Right cardiac atrium (tissue), 5 donors: ENCODE measurements at regions of chr10 and their contacts with region 1.

Region 1: DNA sequence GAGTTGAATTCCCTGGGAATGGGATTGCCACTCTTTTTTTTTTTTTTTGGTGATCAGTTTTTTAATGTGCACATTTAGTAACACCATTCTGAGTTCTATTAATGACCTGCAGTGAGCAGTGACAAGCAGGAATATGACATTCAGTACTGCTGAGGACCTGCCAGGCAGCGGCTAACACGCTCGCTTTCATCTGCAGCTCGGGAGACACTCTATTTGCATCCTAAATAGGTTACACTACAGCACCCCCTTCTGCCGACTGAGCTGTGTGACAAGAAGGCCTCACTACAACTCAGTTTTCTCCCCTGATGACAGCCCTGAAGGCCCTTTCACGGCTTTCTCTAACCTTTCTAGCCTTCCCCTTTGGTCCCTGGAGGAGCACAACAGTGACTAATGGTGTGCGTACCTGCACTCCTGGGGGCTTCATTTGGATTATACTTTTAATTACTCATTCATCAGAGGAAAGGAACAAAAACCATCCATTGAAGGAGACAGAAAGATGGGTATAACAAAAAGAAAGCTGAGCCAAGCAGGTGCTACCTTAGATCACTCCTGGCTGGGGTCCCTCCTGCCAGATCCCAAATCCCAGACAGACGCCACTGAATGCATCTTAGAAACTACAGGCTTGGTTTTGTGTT is 872.4 kb downstream of the LRMDA start:
- DNase-seq: peak; percentile 77 to 89 (median 84)
- ATAC-seq: peak; percentile 95 to 97
- H3K4me3 ChIP-seq: no peak overlapping the region
- H3K27ac ChIP-seq: peak overlapping the region; percentile 66
- H3K4me1 ChIP-seq: peaks cover 2% of the 10 kb centered on the region
- H3K27me3 ChIP-seq: no peaks in the 10 kb centered on the region

Region 2: GRCh38 chr10:75410132-75411005 is 893.4 kb before region 1 on chr10:
- intact Hi-C with region 1: loop called in 1 of 4 experiments (anchors 5 kb)
- DNase-seq: no peak
- ATAC-seq: no peak
- H3K4me3 ChIP-seq: peak overlapping the region; percentile 84
- H3K27ac ChIP-seq: no peak overlapping the region
- H3K4me1 ChIP-seq: no peaks in the 10 kb centered on the region
- H3K27me3 ChIP-seq: no peaks in the 10 kb centered on the region

Region 3: GRCh38 chr10:75827587-75828021 is 476.2 kb before region 1 on chr10:
- intact Hi-C with region 1: no loop called
- DNase-seq: no peak
- ATAC-seq: no peak
- H3K4me3 ChIP-seq: no peak overlapping the region
- H3K27ac ChIP-seq: no peak overlapping the region
- H3K4me1 ChIP-seq: peaks cover 2% of the 10 kb centered on the region
- H3K27me3 ChIP-seq: no peaks in the 10 kb centered on the region

Region 4: DNA sequence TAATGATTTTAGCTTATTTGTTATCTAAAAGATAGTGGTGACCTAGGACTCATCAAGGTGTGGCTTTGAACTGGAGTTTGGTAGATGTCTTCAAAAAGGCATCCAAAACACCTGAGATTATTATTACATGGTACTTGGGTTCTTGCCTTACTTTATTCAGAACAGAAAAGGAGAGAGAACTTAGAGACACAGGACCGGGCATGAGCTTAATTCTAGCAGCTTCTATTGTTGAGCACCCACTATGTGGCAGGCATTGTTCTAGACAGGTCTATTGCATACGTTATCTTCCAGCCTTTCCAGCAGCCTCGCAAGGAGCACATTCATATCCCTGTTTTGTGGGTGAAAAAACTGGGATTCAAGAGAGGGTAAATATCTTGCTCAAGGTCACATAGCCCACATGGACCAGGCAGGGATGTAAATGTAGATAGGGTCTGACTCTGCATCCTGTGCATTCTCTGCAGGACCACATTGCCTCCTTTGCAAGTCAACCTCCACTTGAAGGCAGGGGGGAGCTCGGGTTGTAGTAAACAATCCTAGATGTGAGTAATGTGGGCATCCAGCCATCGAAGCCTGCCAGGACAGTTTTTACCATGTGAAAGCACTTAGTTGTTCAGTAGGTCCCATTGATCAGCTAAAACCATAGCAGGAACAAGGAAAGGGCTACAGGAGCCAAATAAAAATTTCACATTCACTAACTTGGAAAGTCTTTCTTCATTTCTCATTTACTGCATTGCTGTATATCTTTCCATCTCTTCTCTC is 321.0 kb before region 1 on chr10:
- intact Hi-C with region 1: no loop called
- DNase-seq: peak in 2 of 3 donors; percentile 19 to 62
- ATAC-seq: no peak
- H3K4me3 ChIP-seq: no peak overlapping the region
- H3K27ac ChIP-seq: no peak overlapping the region
- H3K4me1 ChIP-seq: no peaks in the 10 kb centered on the region
- H3K27me3 ChIP-seq: no peaks in the 10 kb centered on the region

Region 5: DNA sequence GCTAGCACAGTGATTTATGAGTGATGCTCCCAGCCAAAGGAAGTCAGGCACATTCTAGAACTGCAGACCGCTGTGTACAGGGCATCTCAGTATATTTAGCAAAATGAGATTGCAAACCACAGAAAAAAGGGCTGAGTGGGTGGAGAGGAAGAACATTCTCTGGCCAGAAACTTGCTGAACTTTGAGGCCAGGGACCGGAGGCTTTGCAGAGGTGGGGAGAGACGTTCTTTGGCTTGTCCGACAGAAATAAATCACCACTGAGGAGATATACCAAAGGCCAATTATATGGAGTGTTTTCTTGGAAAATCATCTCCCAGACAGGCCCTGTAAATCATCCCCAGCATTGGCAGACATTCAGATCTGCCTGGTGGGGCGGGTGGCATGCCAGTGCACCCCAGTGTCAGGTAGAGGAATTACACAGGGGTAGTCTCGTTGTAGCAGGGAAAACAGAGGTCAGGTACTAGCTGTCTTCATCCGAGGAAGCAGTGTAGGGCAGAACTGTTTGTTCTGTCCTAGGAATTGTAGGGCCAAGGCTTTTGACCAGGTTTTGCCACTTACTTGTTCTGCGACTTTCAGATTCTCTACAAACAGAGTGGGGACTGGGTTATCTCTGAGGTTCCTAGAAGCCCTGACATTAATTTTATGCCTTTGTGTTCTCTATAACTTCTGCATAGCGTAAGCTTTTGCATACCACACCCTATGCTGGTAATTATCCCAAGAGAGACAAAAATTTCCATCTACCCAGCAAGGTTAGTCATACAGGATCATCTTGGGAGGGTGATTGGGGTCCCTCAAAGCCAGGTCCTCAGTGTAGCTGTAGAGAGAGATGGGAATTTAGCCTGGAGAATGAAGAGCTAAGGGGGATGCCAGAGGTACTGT is 216.8 kb before region 1 on chr10:
- intact Hi-C with region 1: no loop called
- DNase-seq: no peak
- ATAC-seq: peak; percentile 46 to 57
- H3K4me3 ChIP-seq: no peak overlapping the region
- H3K27ac ChIP-seq: no peak overlapping the region
- H3K4me1 ChIP-seq: no peaks in the 10 kb centered on the region
- H3K27me3 ChIP-seq: no peaks in the 10 kb centered on the region

Region 6: DNA sequence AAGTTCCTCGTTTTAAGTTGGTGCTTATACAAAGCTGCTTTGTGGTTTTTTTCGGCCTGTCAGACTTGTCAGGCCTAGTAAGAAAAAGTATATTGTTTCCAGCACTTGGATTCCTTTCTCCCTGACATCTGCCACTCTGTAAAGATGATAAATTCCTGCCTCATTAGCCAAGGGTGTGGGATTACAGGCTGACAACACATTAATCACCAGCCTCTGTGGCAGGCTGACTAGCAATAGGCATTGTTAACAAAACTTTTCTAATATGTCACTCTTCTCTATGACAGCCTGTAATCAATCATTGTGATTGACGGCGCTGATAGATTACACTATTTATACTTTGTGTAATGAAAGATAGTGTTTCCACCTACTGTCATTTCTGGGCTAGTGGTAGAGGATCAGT is 189.8 kb before region 1 on chr10:
- intact Hi-C with region 1: loop called in 1 of 4 experiments (anchors 10 kb)
- DNase-seq: no peak
- ATAC-seq: no peak
- H3K4me3 ChIP-seq: no peak overlapping the region
- H3K27ac ChIP-seq: no peak overlapping the region
- H3K4me1 ChIP-seq: peaks cover 2% of the 10 kb centered on the region
- H3K27me3 ChIP-seq: no peaks in the 10 kb centered on the region

Region 7: DNA sequence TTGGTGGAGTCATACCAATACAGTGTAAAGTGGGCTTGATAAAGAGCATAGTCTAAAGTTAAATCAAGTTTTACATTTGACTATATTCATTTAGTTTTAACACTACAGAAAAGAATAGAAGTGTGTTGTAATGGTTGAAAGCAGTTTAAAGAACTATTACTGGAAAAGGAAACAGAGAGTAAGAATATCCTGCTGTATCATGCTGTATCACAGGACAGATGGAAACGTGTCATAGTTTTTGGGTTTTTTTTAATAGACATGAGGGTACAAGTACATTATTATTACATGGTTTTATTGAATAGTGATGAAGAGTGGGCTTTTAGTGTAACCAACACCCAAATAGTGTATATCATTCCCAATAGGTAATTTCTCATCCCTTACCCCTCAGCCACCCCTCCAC is 72.0 kb after region 1 on chr10:
- intact Hi-C with region 1: no loop called
- DNase-seq: no peak
- ATAC-seq: no peak
- H3K4me3 ChIP-seq: no peak overlapping the region
- H3K27ac ChIP-seq: no peak overlapping the region
- H3K4me1 ChIP-seq: no peaks in the 10 kb centered on the region
- H3K27me3 ChIP-seq: no peaks in the 10 kb centered on the region

Region 8: DNA sequence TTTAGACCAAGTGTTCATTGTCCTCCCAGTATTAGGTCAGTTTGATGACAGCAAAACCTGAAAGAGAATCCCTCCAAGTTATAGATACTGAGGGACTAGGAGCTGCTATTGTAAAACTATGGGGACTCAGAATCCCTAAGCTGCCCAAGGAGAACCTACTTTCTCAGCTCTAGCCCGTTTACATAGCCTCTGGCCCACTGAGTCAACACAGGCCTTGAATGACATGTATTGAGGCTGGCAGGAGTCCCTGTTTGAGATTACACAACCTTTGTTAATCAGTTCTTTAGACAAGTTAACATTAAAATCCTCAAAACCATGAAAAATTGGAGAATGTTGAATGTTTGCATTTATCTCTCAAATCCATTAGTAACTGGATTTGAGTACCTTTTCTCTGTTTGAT is 254.8 kb after region 1 on chr10:
- intact Hi-C with region 1: loop called in 1 of 4 experiments (anchors 10 kb)
- DNase-seq: peak in 1 of 3 donors; percentile 32
- ATAC-seq: peak in 1 of 2 donors; percentile 37
- H3K4me3 ChIP-seq: no peak overlapping the region
- H3K27ac ChIP-seq: peak overlapping the region; percentile 31
- H3K4me1 ChIP-seq: peaks cover 6% of the 10 kb centered on the region
- H3K27me3 ChIP-seq: no peaks in the 10 kb centered on the region